Body of pancreas (tissue), 4 donors: ENCODE measurements at regions of chr10 and their contacts with region 1.

Region 1: GRCh38 chr10:97869091-97870042 is 19.7 kb downstream of the GOLGA7B start:
- DNase-seq: peak; percentile 90 to 95 (median 94)
- ATAC-seq: peak; percentile 98
- H3K4me3 ChIP-seq: no peak overlapping the region
- H3K27ac ChIP-seq: peak overlapping the region; percentile 23 to 65 (median 50)
- H3K4me1 ChIP-seq: peaks cover 18% of the 10 kb centered on the region
- H3K27me3 ChIP-seq: no peaks in the 10 kb centered on the region
- CTCF ChIP-seq: peak; percentile 84 to 99 (median 99)
- POLR2A ChIP-seq: peak in 1 of 3 donors; percentile 24

Region 2: GRCh38 chr10:97759158-97759887 is 110.0 kb before region 1 on chr10:
- intact Hi-C with region 1: loop called (anchors 5 kb)
- DNase-seq: peak; percentile 73 to 82 (median 80)
- ATAC-seq: peak; percentile 67
- H3K4me3 ChIP-seq: no peak overlapping the region
- H3K27ac ChIP-seq: peak overlapping the region in 2 of 4 donors; percentile 27 to 89
- H3K4me1 ChIP-seq: peaks cover 33% of the 10 kb centered on the region
- H3K27me3 ChIP-seq: no peaks in the 10 kb centered on the region
- CTCF ChIP-seq: peak; percentile 87 to 94 (median 92)
- POLR2A ChIP-seq: no peak